ENCODE measurements at regions of chr10 and their contacts with region 1.

Region 1: DNA sequence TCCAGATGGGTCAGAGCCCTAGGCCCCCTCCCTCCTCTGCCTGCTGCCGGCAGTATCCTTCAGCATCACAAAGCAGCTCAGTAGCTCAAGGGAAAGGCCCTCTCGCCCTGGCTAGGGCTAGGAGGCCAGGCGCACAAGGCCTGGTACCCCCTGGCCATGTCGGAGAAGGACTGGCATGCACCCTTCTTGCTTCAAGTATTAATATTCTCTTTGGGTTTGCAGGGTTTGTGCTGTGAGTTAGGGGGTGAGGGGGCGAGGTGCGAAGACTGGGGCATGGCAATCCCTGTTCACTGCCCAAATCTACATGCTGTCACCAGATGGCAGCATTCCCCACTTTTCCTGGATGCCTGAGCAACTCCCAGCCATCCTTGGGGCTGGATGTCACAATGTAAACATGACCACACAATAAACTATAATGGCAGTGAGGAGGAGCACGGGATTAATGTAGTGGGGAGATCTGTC is 105.2 kb downstream of the NEURL1 start:
- DNase-seq: peak; percentile 31 to 81
- H3K4me3 ChIP-seq: no peak overlapping the region
- H3K27ac ChIP-seq: no peak overlapping the region
- H3K4me1 ChIP-seq: peaks cover 0 to 4% (median 1%) of the 10 kb centered on the region in 4 experiments; a peak in 3 of 7 replicates
- H3K27me3 ChIP-seq: no peaks in the 10 kb centered on the region; a peak in 2 of 7 replicates
- CTCF ChIP-seq: peak; percentile 88 to 90 (median 88)
- EP300 ChIP-seq: no peak
- POLR2A ChIP-seq: no peak
- RAD21 ChIP-seq: peak; percentile 91 to 92

Region 2: GRCh38 chr10:103578782-103579382 is 19.8 kb before region 1 on chr10:
- CTCF ChIA-PET with region 1: interaction called, 121 read pairs
- POLR2A ChIA-PET with region 1: interaction called, 5 read pairs
- DNase-seq: no peak
- H3K4me3 ChIP-seq: no peak overlapping the region
- H3K27ac ChIP-seq: no peak overlapping the region
- H3K4me1 ChIP-seq: no peaks in the 10 kb centered on the region; a peak in 1 of 7 replicates
- H3K27me3 ChIP-seq: no peaks in the 10 kb centered on the region; a peak in 1 of 7 replicates
- CTCF ChIP-seq: no peak
- EP300 ChIP-seq: no peak
- POLR2A ChIP-seq: no peak
- RAD21 ChIP-seq: no peak

Region 3: DNA sequence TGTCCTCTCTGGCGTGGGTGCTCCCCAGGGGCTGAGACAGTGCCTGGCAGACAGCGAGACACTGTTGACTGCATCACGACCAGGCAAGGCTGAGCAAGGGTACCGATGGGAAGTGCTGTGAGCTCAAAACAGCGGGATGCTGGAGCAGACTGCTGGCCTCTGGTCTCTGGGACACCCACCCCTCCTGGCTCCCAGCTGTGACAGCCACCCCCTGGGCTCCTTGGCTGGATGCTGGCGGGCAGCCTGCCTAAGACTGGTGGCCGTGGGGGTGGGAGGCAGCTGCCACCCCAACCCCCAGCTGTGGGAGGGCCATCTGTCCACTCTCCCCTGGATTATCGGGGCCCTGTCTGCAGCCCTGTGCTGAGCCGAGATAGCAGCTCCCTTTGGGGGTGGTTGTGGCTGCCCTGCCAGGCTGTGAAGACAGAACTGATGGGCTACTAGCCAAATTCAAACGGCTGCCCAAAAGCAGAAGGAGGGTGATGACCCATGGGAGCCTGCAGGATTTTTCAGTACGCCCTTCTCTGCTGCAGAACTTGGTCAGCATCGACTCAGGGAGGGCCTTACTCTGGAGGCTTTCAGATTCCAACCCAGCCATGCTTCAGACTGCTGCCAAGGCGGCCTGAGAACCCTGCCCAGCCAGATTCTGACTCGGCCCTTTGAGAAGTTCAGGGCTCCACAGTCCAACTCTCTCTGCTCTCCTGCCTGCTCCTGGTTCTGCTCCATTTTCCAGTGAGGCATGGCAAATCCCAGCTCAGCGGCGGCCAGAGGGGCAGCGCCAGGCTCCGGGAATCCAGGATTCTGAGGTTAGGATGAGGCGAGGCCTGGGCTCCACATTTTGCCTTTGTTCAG is 20.1 kb after region 1 on chr10:
- CTCF ChIA-PET with region 1: interaction called, 68 read pairs
- POLR2A ChIA-PET with region 1: no interaction called
- DNase-seq: no peak
- H3K4me3 ChIP-seq: no peak overlapping the region
- H3K27ac ChIP-seq: no peak overlapping the region
- H3K4me1 ChIP-seq: no peaks in the 10 kb centered on the region; a peak in 1 of 7 replicates
- H3K27me3 ChIP-seq: no peaks in the 10 kb centered on the region
- CTCF ChIP-seq: no peak
- EP300 ChIP-seq: no peak
- POLR2A ChIP-seq: no peak
- RAD21 ChIP-seq: no peak

Region 4: DNA sequence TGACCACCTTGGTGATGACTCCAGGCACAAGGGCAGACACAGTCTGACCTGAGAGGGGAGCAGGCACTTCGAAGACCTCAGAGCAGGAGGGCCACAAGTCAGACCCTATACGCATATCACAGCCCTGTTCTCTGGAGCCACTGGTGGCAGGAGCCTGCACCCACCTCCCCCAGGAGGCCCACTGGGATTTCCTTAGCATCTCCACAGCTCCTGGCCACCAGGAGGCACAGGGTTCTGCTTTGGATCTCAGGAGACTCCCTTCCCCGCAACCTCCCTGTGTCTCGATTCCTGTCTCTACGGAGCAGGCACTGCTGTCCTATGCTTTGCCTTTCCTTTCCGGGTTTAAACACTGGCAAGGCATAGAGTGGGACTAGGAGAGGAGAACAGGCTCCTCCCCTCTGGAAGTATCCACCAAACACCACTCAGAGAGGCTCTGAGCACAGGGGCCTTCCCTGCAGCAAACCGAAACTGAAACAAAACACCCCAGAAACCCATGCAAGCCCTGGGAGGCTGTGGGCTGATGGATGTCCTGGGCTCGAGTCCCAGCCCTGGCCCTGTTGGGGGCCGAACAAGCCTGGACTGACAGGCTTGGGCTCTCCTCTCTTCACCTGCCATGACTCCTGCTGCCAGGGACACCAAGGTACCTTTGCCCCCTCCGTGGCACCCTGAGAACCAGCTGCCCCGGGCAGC is 61.1 kb after region 1 on chr10:
- CTCF ChIA-PET with region 1: interaction called, 48 read pairs
- POLR2A ChIA-PET with region 1: interaction called, 4 read pairs
- DNase-seq: no peak
- H3K4me3 ChIP-seq: peak overlapping the region in 2 of 4 experiments; percentile 8 to 51; a peak in 1 of 8 replicates
- H3K27ac ChIP-seq: no peak overlapping the region
- H3K4me1 ChIP-seq: peaks cover 0 to 27% (median 18%) of the 10 kb centered on the region in 4 experiments; a peak in 6 of 7 replicates
- H3K27me3 ChIP-seq: no peaks in the 10 kb centered on the region; a peak in 1 of 7 replicates
- CTCF ChIP-seq: no peak
- EP300 ChIP-seq: no peak
- POLR2A ChIP-seq: no peak
- RAD21 ChIP-seq: no peak

Region 5: GRCh38 chr10:103696411-103697145 is 97.9 kb after region 1 on chr10:
- CTCF ChIA-PET with region 1: interaction called, 448 read pairs
- POLR2A ChIA-PET with region 1: no interaction called
- DNase-seq: peak; percentile 53 to 73
- H3K4me3 ChIP-seq: peak overlapping the region in 1 of 4 experiments; percentile 18; a peak in 1 of 8 replicates
- H3K27ac ChIP-seq: no peak overlapping the region
- H3K4me1 ChIP-seq: peaks cover 3 to 21% (median 14%) of the 10 kb centered on the region in 4 experiments
- H3K27me3 ChIP-seq: peaks cover 7 to 35% (median 30%) of the 10 kb centered on the region in 4 experiments
- CTCF ChIP-seq: peak; percentile 22 to 38 (median 37)
- EP300 ChIP-seq: no peak
- POLR2A ChIP-seq: no peak
- RAD21 ChIP-seq: peak; percentile 23 to 28; a peak in 3 of 4 replicates

Region 6: DNA sequence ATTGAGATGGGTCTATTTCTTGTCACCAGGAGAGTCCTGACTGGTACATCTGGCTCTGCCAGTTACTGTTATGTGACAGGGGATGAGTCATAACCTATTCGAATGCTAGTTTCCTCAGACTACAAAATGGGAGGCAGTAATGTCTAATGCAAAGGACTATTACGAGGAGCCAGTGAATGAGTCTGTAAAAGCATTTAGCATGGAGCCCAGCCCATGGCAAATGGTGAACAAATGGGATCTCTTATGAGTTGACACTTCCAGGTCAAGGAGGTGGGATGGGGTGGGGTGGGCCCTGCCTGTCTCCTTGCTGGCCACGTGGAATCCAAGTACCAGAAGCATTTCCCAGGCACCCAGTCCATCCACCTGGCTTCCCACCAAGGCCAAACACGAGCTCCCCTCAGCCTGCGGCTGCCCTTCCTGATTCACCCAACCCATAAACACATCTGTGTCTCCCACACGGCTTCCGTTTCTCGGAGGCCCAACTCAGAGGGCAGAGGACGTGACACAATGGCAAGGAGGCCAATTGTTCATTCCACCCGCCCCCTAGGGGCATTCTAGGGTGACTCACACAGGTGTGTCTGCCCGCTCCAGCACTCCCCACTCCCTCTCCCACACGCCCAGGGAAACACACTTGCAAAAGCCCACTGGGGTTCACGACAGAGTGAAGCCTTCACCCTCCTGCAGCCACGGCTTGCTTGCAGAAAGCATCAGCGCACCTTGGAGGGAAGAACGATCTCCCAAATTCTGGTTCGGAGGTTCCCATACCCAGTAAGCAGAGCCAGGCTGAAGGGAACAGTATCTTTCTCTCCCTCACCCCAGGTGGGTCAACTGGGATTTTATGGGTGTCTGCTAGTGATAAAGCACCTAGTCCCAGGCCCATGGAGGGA is 146.9 kb after region 1 on chr10:
- CTCF ChIA-PET with region 1: no interaction called
- POLR2A ChIA-PET with region 1: no interaction called
- DNase-seq: no peak
- H3K4me3 ChIP-seq: no peak overlapping the region
- H3K27ac ChIP-seq: no peak overlapping the region; the same call in 1 of the 2 replicates
- H3K4me1 ChIP-seq: no peaks in the 10 kb centered on the region; a peak in 2 of 7 replicates
- H3K27me3 ChIP-seq: no peaks in the 10 kb centered on the region; a peak in 1 of 7 replicates
- CTCF ChIP-seq: peak; percentile 15 to 29 (median 16); a peak in 3 of 4 replicates
- EP300 ChIP-seq: no peak
- POLR2A ChIP-seq: no peak
- RAD21 ChIP-seq: peak in 1 of 2 experiments; percentile 28; a peak in 3 of 4 replicates

Measured in H1 (cell line).